ENCODE measurements at regions of chr2 and their contacts with region 1.

Region 1: DNA sequence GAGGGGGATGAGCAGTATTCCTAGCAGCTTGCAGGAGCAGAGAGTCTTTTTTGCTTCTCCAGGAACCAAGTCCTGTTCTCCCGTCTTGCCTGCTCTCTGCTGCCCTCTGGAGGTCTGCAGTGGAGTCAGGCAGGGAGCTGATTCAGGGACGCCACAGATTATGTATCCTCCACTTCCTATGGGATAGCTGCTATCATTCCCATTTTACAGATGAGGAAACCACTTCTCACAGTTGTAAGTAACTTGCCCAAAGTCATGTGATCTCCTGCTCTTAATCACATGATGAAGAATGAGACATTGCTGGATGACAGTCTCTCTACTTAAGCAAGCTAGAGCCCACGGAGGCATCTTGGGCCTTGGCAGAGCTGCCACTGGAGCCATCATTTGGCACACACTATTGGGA is 8.3 kb downstream of the SLC4A5 start:
- DNase-seq: peak; percentile 72 to 81
- ATAC-seq: peak; percentile 90 to 96
- H3K4me3 ChIP-seq: no peak overlapping the region
- H3K27ac ChIP-seq: no peak overlapping the region
- H3K4me1 ChIP-seq: no peaks in the 10 kb centered on the region
- CTCF ChIP-seq: peak; percentile 90
- EP300 ChIP-seq: no peak
- POLR2A ChIP-seq: no peak
- RAD21 ChIP-seq: peak; percentile 72 to 83

Region 2: DNA sequence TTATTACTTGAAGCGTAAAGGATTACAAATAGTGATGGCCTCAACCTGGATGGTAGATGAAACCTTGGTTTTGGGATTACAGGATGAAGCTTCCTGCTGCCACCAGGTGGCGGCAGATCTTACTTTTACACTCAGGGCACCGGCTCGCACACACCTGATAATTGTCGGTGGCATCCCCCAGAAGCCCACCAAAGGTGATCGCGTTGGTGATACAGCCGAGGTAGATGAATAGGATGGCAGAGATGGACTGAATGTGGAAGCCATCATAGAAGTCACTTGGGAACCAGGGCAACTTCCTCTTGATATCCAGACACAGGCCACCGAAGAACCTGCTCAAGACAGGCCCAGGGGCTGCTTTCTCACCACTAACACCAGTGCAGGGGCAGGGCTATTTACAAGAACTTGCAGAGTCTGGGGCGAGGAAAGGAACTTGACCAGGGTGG is 84.7 kb before region 1 on chr2:
- CTCF ChIA-PET with region 1: interaction called, 66 read pairs
- POLR2A ChIA-PET with region 1: interaction called, 3 read pairs
- DNase-seq: peak; percentile 56 to 78
- ATAC-seq: peak; percentile 74 to 89; a peak in 5 of 6 replicates
- H3K4me3 ChIP-seq: no peak overlapping the region
- H3K27ac ChIP-seq: no peak overlapping the region
- H3K4me1 ChIP-seq: no peaks in the 10 kb centered on the region
- CTCF ChIP-seq: peak; percentile 92
- EP300 ChIP-seq: no peak
- POLR2A ChIP-seq: no peak
- RAD21 ChIP-seq: peak; percentile 78 to 79

Region 3: GRCh38 chr2:74267068-74267467 is 67.9 kb before region 1 on chr2:
- CTCF ChIA-PET with region 1: interaction called, 20 read pairs
- POLR2A ChIA-PET with region 1: no interaction called
- DNase-seq: peak; percentile 55 to 56
- ATAC-seq: peak; percentile 73 to 77; a peak in 4 of 6 replicates
- H3K4me3 ChIP-seq: no peak overlapping the region
- H3K27ac ChIP-seq: no peak overlapping the region
- H3K4me1 ChIP-seq: 0 out of 3 replicates have a peak, but pooled peaks cover 4% of the 10 kb centered on the region
- CTCF ChIP-seq: peak; percentile 30; the same call in 2 of the 3 replicates
- EP300 ChIP-seq: no peak
- POLR2A ChIP-seq: no peak
- RAD21 ChIP-seq: peak in 1 of 2 experiments; percentile 45; a peak in 1 of 5 replicates

Region 4: DNA sequence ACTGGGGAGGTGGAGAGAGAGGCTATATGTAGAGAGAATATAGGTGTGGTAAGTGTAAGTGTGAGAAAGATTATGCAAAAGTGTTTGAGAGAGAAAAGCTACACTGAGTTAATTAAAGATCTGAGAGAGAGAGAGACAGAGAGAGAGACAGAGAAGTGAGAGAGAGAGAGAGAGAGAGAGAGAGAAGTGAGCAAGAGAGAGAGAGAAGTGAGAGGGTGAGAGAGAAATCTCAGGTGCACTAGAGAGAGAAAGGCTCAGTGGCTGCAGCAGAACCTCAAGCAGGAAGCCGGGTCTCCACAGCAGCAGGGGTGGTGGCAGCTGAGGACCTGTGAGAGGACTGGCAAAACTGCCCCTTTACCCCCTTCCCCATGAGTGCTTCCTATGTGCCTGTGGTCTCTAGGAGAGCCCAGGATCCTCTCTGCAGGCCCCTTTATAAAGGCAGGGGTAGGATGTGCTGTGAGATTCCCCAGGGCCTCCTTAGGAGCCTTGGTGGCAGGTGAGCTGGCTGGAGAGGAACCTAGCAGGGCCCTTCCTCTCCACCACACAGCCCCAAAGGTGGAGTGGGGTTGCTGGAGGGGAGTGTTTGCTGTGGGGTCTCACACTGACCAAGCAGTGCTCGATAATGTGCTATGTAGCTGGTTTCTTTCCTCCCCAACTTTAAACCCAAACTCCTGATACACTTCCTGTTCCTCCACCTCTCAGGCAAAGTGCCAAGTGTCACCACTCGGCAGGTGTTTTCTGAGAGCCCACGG is 44.3 kb before region 1 on chr2:
- CTCF ChIA-PET with region 1: interaction called, 20 read pairs
- POLR2A ChIA-PET with region 1: no interaction called
- DNase-seq: no peak
- ATAC-seq: no peak; a peak in 1 of 6 replicates
- H3K4me3 ChIP-seq: no peak overlapping the region
- H3K27ac ChIP-seq: no peak overlapping the region
- H3K4me1 ChIP-seq: no peaks in the 10 kb centered on the region
- CTCF ChIP-seq: no peak
- EP300 ChIP-seq: no peak
- POLR2A ChIP-seq: no peak
- RAD21 ChIP-seq: no peak

Region 5: GRCh38 chr2:74345272-74345943 is 10.5 kb after region 1 on chr2:
- CTCF ChIA-PET with region 1: interaction called, 60 read pairs
- POLR2A ChIA-PET with region 1: no interaction called
- DNase-seq: no peak
- ATAC-seq: peak in 1 of 2 experiments; percentile 30; a peak in 2 of 6 replicates
- H3K4me3 ChIP-seq: no peak overlapping the region
- H3K27ac ChIP-seq: no peak overlapping the region
- H3K4me1 ChIP-seq: no peaks in the 10 kb centered on the region
- CTCF ChIP-seq: no peak
- EP300 ChIP-seq: no peak
- POLR2A ChIP-seq: 0 out of 2 replicates have a peak, but pooled peaks have one; percentile 7
- RAD21 ChIP-seq: no peak

Region 6: DNA sequence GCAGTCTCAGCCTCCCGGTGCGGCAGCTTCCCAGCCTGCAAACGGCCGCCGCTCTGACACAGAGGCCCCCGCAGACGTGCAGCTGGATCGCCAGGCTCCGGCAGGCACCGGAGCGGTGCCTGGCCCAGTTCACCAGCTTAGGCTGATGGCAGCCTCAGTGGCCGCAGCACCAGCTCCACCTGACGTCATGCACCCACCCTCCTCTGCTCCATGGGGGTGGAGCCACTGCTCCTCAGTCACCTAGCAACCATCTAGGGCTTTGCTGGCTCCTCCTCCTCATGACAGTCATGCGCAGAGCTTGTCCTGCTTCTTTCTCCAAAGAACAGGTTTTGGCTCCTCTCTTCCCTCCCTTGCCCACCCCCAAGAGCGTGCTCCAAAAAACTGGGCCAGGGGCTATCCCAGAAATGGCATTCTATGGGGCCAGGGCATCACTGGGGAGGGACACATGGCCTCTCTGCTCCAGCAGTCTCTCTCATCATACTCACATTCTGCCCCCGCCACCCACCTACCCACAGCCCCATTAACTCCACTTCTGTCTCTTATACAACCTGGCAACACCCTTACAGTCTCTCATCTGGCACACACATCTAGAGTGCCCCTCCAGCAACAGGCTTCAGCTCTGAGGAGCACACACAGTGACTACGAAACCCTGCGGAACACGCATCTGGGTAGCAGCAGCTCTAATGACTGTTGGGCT is 39.7 kb after region 1 on chr2:
- CTCF ChIA-PET with region 1: interaction called, 30 read pairs
- POLR2A ChIA-PET with region 1: no interaction called
- DNase-seq: peak in 1 of 2 experiments; percentile 7
- ATAC-seq: peak in 1 of 2 experiments; percentile 64; a peak in 3 of 6 replicates
- H3K4me3 ChIP-seq: no peak overlapping the region
- H3K27ac ChIP-seq: no peak overlapping the region
- H3K4me1 ChIP-seq: peaks cover 4% of the 10 kb centered on the region; the same call in 1 of the 3 replicates
- CTCF ChIP-seq: no peak
- EP300 ChIP-seq: no peak
- POLR2A ChIP-seq: no peak
- RAD21 ChIP-seq: no peak

Measured in A549 (cell line).